Activated CD4-positive, alpha-beta memory T cell treated with anti-CD3 and anti-CD28 coated beads, Interleukin-2, amount 10 ng/mL, durations not matched to agents 7 days and 5 days (primary cell): ENCODE measurements at regions of chr1 and their contacts with region 1.

Region 1: GRCh38 chr1:111507411-111508201 is 4.2 kb upstream of the ADORA3 start:
- DNase-seq: peak; percentile 86
- H3K4me3 Mint-ChIP-seq: peak overlapping the region; percentile 65
- H3K27ac Mint-ChIP-seq: peak overlapping the region; percentile 89
- H3K4me1 Mint-ChIP-seq: peaks cover 56% of the 10 kb centered on the region
- H3K27me3 Mint-ChIP-seq: no peaks in the 10 kb centered on the region

Region 2: GRCh38 chr1:111441573-111442192 is 65.9 kb before region 1 on chr1:
- CTCF ChIA-PET with region 1: interaction called, 11 read pairs
- POLR2A ChIA-PET with region 1: interaction called, 4 read pairs
- DNase-seq: peak; percentile 65
- H3K4me3 Mint-ChIP-seq: no peak overlapping the region
- H3K27ac Mint-ChIP-seq: peak overlapping the region; percentile 15
- H3K4me1 Mint-ChIP-seq: peaks cover 29% of the 10 kb centered on the region
- H3K27me3 Mint-ChIP-seq: no peaks in the 10 kb centered on the region

Region 3: DNA sequence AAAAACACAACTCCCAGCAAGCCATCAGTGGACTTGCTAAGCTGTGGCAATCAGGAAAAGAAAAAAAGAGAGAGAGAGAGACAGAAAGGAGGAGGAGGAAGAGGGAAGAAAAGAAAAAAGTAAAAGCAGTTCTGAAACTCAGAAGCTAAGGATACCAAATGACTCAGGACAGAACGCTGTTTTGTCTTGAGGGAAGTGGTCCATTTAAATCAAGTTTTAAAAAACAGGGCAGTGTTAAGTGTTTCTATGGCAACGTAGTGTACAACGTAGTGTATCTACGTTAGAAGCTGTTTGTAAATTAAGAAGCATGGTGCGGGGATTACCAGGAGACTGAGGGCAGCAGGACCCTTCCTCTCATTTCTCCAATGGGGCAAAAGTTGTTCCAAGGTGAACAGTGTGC is 10.0 kb before region 1 on chr1:
- CTCF ChIA-PET with region 1: interaction called, 38 read pairs
- POLR2A ChIA-PET with region 1: interaction called, 24 read pairs
- DNase-seq: no peak
- H3K4me3 Mint-ChIP-seq: no peak overlapping the region
- H3K27ac Mint-ChIP-seq: no peak overlapping the region
- H3K4me1 Mint-ChIP-seq: peaks cover 31% of the 10 kb centered on the region
- H3K27me3 Mint-ChIP-seq: peaks cover 4% of the 10 kb centered on the region

Region 4: GRCh38 chr1:111619635-111620440 is 112.2 kb after region 1 on chr1 and contains the start of gene RAP1A:
- CTCF ChIA-PET with region 1: interaction called, 85 read pairs
- POLR2A ChIA-PET with region 1: interaction called, 141 read pairs
- DNase-seq: peak; percentile 95
- H3K4me3 Mint-ChIP-seq: peak within 1 kb of the TSS; percentile 93
- H3K27ac Mint-ChIP-seq: peak within 1 kb of the TSS; percentile 86
- H3K4me1 Mint-ChIP-seq: peaks cover 70% of the 10 kb centered on the region
- H3K27me3 Mint-ChIP-seq: no peaks in the 10 kb centered on the region
- total RNA-seq, gene RAP1A: 219 to 221 TPM

Region 5: GRCh38 chr1:111658622-111659021 is 151.0 kb after region 1 on chr1:
- CTCF ChIA-PET with region 1: interaction called, 12 read pairs
- POLR2A ChIA-PET with region 1: interaction called, 14 read pairs
- DNase-seq: no peak
- H3K4me3 Mint-ChIP-seq: no peak overlapping the region
- H3K27ac Mint-ChIP-seq: no peak overlapping the region
- H3K4me1 Mint-ChIP-seq: peaks cover 46% of the 10 kb centered on the region
- H3K27me3 Mint-ChIP-seq: no peaks in the 10 kb centered on the region

Region 6: GRCh38 chr1:111709986-111710385 is 202.4 kb after region 1 on chr1:
- CTCF ChIA-PET with region 1: interaction called, 62 read pairs
- POLR2A ChIA-PET with region 1: interaction called, 29 read pairs
- DNase-seq: no peak
- H3K4me3 Mint-ChIP-seq: no peak overlapping the region
- H3K27ac Mint-ChIP-seq: peak overlapping the region; percentile 2
- H3K4me1 Mint-ChIP-seq: peaks cover 48% of the 10 kb centered on the region
- H3K27me3 Mint-ChIP-seq: no peaks in the 10 kb centered on the region

Region 7: DNA sequence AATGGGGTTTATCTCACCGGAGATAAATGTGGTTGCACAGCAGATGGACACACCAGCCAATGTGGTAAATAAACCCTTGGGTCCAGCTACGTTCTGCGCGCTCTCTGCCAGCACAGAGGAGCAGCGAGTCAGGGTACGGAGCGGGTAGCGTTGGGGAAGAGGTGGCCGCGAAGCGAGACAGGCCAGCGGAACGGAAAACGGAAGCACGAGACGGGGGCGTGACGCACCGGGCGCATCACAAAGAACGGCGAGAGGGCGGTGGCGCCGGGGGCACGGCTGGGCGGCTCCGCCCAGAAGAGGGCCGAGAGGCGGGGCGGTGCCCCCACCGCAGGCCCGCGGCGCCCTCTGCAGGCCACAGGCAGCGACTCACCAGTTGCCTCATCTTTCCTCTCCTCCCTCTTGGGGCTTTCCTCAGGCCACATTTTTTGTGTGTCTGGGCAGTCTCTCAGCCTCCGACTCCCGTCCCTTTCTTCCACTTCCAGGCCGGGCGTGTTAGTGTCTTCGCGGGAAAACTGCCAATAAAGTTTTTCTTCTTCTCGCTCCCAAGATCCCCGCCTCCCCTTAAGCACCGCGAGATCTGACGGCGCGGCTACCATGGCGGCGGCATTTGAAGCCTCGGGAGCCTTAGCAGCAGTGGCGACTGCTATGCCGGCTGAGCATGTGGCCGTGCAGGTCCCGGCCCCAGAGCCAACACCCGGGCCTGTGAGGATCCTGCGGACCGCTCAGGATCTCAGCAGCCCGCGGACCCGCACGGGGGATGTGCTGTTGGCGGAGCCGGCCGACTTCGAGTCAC is 247.9 kb after region 1 on chr1 and contains the start of gene DDX20:
- CTCF ChIA-PET with region 1: interaction called, 29 read pairs
- POLR2A ChIA-PET with region 1: interaction called, 33 read pairs
- DNase-seq: peak; percentile 94
- H3K4me3 Mint-ChIP-seq: peak within 1 kb of the TSS; percentile 93
- H3K27ac Mint-ChIP-seq: peak within 1 kb of the TSS; percentile 96
- H3K4me1 Mint-ChIP-seq: peaks cover 48% of the 10 kb centered on the region
- H3K27me3 Mint-ChIP-seq: peaks cover 4% of the 10 kb centered on the region
- total RNA-seq, gene DDX20: 11.2 to 11.8 TPM